Aorta (tissue), 5 donors: ENCODE measurements at regions of chr5 and their contacts with region 1.

Region 1: GRCh38 chr5:126422989-126423788 is at the start of gene GRAMD2B:
- DNase-seq: peak; percentile 92 to 95
- ATAC-seq: peak; percentile 96
- H3K4me3 ChIP-seq: peak within 1 kb of the TSS; percentile 99
- H3K27ac ChIP-seq: peak within 1 kb of the TSS; percentile 83 to 97
- H3K4me1 ChIP-seq: peaks cover 3 to 4% of the 10 kb centered on the region in 2 donors
- H3K27me3 ChIP-seq: no peaks in the 10 kb centered on the region
- total RNA-seq, gene GRAMD2B: 30.6 to 44.7 TPM

Region 2: GRCh38 chr5:126354012-126354857 is 69.0 kb before region 1 on chr5:
- intact Hi-C with region 1: loop called in 1 of 2 experiments (anchors 10 kb)
- DNase-seq: no peak
- ATAC-seq: peak; percentile 70
- H3K4me3 ChIP-seq: peak overlapping the region in 1 of 2 donors; percentile 48
- H3K27ac ChIP-seq: no peak overlapping the region
- H3K4me1 ChIP-seq: no peaks in the 10 kb centered on the region
- H3K27me3 ChIP-seq: no peaks in the 10 kb centered on the region

Region 3: DNA sequence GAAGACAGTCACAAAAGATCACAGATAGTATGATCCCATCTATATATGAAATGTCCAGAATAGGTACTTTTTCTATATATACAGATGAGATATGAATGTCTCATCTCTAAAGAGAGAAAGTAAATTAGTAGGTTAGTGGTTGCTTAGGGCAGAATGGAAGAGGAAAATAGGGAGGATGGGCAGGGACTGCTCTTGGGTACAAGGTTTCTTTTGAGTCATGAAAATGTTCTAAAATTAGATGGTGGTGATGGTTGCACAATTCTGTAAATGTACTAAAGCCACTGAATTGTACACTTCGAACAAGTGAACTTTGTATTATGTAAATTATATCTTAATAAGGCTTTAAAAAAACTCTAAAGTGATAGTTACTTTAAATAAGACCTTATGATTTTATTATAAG is 59.5 kb before region 1 on chr5:
- intact Hi-C with region 1: loop called (anchors 5 to 10 kb)
- DNase-seq: no peak
- ATAC-seq: no peak
- H3K4me3 ChIP-seq: no peak overlapping the region
- H3K27ac ChIP-seq: no peak overlapping the region
- H3K4me1 ChIP-seq: no peaks in the 10 kb centered on the region
- H3K27me3 ChIP-seq: no peaks in the 10 kb centered on the region

Region 4: DNA sequence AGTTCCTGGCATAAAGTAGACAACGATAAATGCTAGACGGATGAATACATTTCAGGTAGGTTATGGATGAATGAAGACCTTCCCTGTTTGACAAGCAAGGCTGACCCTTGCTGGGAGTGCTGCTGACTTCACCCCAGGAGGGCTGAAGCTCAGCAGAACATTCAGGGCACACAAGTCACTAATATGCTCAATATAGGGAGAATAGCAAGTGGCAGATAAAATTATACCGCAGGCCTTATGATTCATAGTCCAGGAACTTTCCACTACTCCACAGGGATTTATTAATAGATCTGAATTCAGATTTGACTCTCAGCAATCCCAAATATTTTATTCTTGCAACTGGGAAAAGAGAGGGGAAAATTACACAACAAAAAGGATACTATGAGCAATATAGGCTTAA is 38.2 kb before region 1 on chr5:
- intact Hi-C with region 1: loop called (anchors 5 kb)
- DNase-seq: no peak
- ATAC-seq: peak; percentile 77
- H3K4me3 ChIP-seq: no peak overlapping the region
- H3K27ac ChIP-seq: peak overlapping the region; percentile 99
- H3K4me1 ChIP-seq: peaks cover 4 to 17% of the 10 kb centered on the region in 2 donors
- H3K27me3 ChIP-seq: no peaks in the 10 kb centered on the region

Region 5: GRCh38 chr5:126499853-126500342 is 76.7 kb after region 1 on chr5:
- intact Hi-C with region 1: loop called in 1 of 2 experiments (anchors 5 kb)
- DNase-seq: no peak
- ATAC-seq: no peak
- H3K4me3 ChIP-seq: no peak overlapping the region
- H3K27ac ChIP-seq: peak overlapping the region in 1 of 2 donors; percentile 34
- H3K4me1 ChIP-seq: no peaks in the 10 kb centered on the region
- H3K27me3 ChIP-seq: no peaks in the 10 kb centered on the region